ENCODE measurements at regions of chr1 and their contacts with region 1.

Region 1: DNA sequence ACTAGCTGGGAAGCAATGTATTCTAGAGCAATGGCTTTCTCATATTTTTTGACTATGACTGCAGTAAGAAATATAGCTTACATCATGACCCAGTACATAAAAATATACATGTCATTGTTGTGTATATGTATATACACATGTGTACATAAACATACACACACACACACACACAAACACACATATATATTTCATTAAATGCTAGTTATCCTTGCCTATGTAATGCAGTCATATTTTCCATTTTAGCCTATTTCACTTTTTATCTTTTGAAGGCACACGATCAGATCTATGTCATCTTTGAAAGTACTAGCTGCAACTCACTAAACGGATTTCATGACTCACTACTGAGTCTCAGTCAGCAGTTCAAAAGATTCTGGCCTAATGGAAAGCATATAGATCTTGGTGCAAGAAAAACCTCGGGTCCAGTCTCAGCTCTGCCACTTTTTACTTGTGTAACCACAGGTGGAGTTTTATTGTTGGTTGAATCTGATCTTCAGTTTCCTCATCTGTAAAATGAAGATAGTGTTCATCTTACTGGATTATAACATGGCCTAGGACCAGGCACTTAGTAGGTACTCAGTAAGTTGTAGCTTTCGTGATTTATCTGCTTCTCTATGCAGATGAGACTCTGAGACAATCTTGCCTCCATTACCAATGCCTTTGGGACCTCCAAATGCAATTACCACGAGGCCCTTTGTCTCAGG is 325.6 kb downstream of the RRAGC start:
- DNase-seq: no peak
- H3K4me3 Mint-ChIP-seq: no peak overlapping the region
- H3K27ac Mint-ChIP-seq: peak overlapping the region; percentile 68
- H3K4me1 Mint-ChIP-seq: peaks cover 8% of the 10 kb centered on the region
- H3K27me3 Mint-ChIP-seq: peaks cover 10% of the 10 kb centered on the region

Region 2: GRCh38 chr1:38486085-38486484 is 47.8 kb before region 1 on chr1:
- intact Hi-C with region 1: no loop called
- DNase-seq: no peak
- H3K4me3 Mint-ChIP-seq: no peak overlapping the region
- H3K27ac Mint-ChIP-seq: no peak overlapping the region
- H3K4me1 Mint-ChIP-seq: peaks cover 2% of the 10 kb centered on the region
- H3K27me3 Mint-ChIP-seq: peaks cover 25% of the 10 kb centered on the region

Region 3: DNA sequence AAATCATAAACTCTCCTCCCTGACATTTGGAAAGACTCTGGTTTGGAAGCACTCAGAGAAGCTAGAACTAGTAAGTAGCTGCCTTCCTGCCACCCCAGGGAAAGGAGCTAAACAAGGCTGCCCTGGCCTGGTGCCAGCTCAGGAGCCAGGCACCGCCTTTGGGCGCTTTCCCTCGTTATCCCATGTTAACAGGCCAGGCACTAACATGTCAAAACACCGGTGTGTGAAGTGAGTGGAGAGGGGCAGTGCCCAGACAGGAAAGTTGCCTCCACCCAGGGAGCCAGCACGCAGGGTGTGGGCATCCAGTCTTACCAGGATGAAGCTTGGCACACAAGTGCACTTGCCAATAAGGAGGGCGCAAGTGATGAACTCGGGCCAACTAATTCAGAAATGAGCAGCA is 21.1 kb before region 1 on chr1:
- intact Hi-C with region 1: no loop called
- DNase-seq: no peak
- H3K4me3 Mint-ChIP-seq: no peak overlapping the region
- H3K27ac Mint-ChIP-seq: no peak overlapping the region
- H3K4me1 Mint-ChIP-seq: no peaks in the 10 kb centered on the region
- H3K27me3 Mint-ChIP-seq: peaks cover 30% of the 10 kb centered on the region

Region 4: DNA sequence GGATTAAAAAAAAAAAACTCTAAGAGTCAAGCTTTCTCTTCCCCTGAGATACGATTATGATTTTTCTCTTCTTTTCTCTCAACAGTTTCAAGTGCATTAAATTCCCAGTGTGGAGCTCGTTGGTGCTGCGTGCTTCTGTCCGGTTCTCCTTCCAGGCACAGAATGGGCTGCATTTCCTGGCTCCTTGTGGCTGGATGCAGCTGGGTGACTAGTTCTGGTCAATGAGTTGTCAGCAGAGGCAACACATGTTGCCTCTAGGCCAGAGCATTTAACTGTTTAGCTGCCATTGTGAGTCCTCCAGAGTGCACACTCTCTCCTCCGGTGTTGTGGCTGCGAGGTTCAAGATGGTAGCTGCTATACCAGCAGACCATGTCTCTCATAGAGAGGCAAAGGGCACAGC is 12.7 kb after region 1 on chr1:
- intact Hi-C with region 1: no loop called
- DNase-seq: no peak
- H3K4me3 Mint-ChIP-seq: no peak overlapping the region
- H3K27ac Mint-ChIP-seq: no peak overlapping the region
- H3K4me1 Mint-ChIP-seq: no peaks in the 10 kb centered on the region
- H3K27me3 Mint-ChIP-seq: peaks cover 39% of the 10 kb centered on the region

Region 5: GRCh38 chr1:38559161-38559824 is 25.4 kb after region 1 on chr1:
- intact Hi-C with region 1: loop called (anchors 1 kb)
- DNase-seq: peak; percentile 97
- H3K4me3 Mint-ChIP-seq: peak overlapping the region; percentile 74
- H3K27ac Mint-ChIP-seq: peak overlapping the region; percentile 88
- H3K4me1 Mint-ChIP-seq: peaks cover 64% of the 10 kb centered on the region
- H3K27me3 Mint-ChIP-seq: peaks cover 37% of the 10 kb centered on the region